MCF 10A (cell line): ENCODE measurements at regions of chr9 and their contacts with region 1.

Region 1: GRCh38 chr9:127283917-127284316 is 19.3 kb downstream of the GARNL3 start:
- DNase-seq: peak; percentile 49
- H3K4me3 Mint-ChIP-seq: no peak overlapping the region
- H3K27ac Mint-ChIP-seq: no peak overlapping the region
- H3K4me1 Mint-ChIP-seq: peaks cover 7% of the 10 kb centered on the region
- H3K27me3 Mint-ChIP-seq: no peaks in the 10 kb centered on the region
- CTCF ChIP-seq: peak; percentile 33

Region 2: GRCh38 chr9:127347831-127348779 is 64.2 kb after region 1 on chr9:
- CTCF ChIA-PET with region 1: no interaction called
- POLR2A ChIA-PET with region 1: no interaction called
- intact Hi-C with region 1: loop called (anchors 1 kb)
- DNase-seq: peak; percentile 38
- H3K4me3 Mint-ChIP-seq: no peak overlapping the region
- H3K27ac Mint-ChIP-seq: no peak overlapping the region
- H3K4me1 Mint-ChIP-seq: no peaks in the 10 kb centered on the region
- H3K27me3 Mint-ChIP-seq: no peaks in the 10 kb centered on the region
- CTCF ChIP-seq: peak; percentile 41